AG04450 (cell line): ENCODE measurements at regions of chr12 and their contacts with region 1.

Region 1: DNA sequence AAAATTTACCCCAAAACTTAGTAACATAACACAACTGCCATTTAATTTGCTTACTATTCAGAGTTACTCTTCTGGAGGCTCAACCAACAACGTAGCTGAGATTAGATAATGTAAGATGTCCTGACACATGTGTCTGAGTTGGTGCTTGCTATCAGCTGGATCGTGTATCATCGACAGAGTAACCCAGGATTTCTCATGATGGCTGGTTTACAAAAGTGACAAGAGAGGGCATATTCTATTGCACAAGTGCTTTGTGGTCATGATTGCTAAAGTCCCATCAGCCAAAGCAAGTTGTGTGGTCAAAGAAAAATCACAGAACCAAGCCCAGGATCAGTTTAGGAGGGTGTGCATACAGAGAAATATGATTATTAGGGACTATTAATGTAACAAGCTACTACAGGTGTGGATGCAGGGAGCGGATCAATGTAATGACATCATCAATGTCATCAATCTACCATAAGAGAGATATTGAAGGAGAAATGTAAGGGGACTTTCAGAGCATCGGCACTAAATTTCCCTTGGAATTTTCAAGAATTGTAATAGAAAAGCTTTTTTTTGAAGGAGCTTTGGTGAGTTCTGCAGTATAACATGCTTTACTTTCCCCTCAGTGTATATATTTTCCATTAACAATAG is 73.5 kb downstream of the CAPZA3 start:
- DNase-seq: no peak
- H3K4me3 ChIP-seq: no peak overlapping the region
- H3K27ac ChIP-seq: no peak overlapping the region
- H3K27me3 ChIP-seq: no peaks in the 10 kb centered on the region
- CTCF ChIP-seq: no peak

Region 2: GRCh38 chr12:20368651-20369304 is 1557.4 kb after region 1 on chr12:
- CTCF ChIA-PET with region 1: interaction called, 12 read pairs
- POLR2A ChIA-PET with region 1: no interaction called
- DNase-seq: no peak
- H3K4me3 ChIP-seq: peak overlapping the region; percentile 69
- H3K27ac ChIP-seq: no peak overlapping the region
- H3K27me3 ChIP-seq: peaks cover 17% of the 10 kb centered on the region
- CTCF ChIP-seq: no peak